ENCODE measurements at regions of chr4 and their contacts with region 1.

Region 1: GRCh38 chr4:146333187-146333894 is 119.0 kb downstream of the REELD1 start:
- DNase-seq: peak; percentile 86
- H3K4me3 Mint-ChIP-seq: no peak overlapping the region
- H3K27ac Mint-ChIP-seq: no peak overlapping the region
- H3K4me1 Mint-ChIP-seq: peaks cover 22% of the 10 kb centered on the region
- H3K27me3 Mint-ChIP-seq: no peaks in the 10 kb centered on the region
- CTCF ChIP-seq: no peak

Region 2: DNA sequence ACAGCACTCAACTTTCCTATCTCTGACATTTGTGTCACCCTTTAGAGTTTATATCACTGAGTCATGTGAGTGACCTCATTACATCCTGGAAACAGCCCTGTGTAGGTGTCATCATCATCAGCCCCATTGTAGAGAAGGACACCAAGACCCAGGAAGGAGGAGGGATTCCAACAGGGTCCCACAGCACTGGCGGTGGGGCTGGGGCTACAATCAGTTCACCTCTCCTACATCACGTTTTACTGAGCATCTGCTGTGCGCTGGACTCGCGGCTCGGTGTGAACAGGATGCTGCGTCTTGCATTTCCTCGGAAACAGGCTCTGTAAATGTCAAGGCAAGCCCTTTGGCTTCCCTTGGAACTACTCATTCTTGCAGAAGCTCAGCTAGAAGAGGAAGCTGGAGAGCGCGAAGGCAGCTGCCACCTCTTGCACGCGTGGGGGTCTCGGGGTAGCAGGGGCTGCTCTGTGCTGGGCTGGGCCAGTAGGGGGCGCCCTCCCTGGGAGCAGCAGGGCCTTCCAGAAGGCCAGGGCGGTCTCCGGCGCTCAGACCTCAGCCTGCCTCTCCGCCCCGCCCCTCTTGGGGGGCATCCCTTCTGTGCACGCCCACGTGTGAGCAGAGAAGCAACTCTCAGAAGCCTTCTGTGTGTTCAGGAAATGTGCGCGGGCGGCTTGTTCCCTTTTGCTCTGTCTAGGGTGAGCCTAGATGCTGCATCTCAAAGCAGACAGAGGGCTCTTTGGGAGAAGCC is 90.0 kb before region 1 on chr4:
- CTCF ChIA-PET with region 1: interaction called, 5 read pairs
- POLR2A ChIA-PET with region 1: no interaction called
- intact Hi-C with region 1: loop called (anchors 2 kb)
- DNase-seq: no peak
- H3K4me3 Mint-ChIP-seq: no peak overlapping the region
- H3K27ac Mint-ChIP-seq: no peak overlapping the region
- H3K4me1 Mint-ChIP-seq: peaks cover 19% of the 10 kb centered on the region
- H3K27me3 Mint-ChIP-seq: no peaks in the 10 kb centered on the region
- CTCF ChIP-seq: peak; percentile 48

Measured in MCF 10A (cell line).